ENCODE measurements at regions of chr2 and their contacts with region 1.

Region 1: DNA sequence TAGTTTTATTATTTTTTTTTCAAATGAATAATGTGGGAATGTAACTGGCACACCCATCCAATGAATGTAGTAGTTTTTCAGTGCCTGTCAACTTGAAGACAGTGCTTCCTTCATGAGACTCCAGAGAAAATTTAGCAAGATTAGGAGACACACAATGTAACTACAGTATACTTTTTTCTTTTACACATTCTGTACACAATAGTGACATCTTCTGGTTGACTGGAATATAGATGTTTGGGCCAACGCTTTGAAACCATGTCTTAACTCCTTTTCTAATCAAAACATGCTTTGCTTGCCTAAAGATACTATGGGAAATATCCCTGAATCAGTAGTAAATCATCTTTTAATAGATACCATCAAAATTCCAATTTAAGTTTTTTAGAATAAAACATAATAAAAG is 229.5 kb upstream of the ZC3H15 start:
- DNase-seq: peak; percentile 76
- ATAC-seq: peak; percentile 78
- H3K4me3 ChIP-seq: no peak overlapping the region
- H3K27ac ChIP-seq: no peak overlapping the region
- H3K4me1 ChIP-seq: no peaks in the 10 kb centered on the region
- H3K27me3 ChIP-seq: no peaks in the 10 kb centered on the region
- CTCF ChIP-seq: peak; percentile 88

Region 2: DNA sequence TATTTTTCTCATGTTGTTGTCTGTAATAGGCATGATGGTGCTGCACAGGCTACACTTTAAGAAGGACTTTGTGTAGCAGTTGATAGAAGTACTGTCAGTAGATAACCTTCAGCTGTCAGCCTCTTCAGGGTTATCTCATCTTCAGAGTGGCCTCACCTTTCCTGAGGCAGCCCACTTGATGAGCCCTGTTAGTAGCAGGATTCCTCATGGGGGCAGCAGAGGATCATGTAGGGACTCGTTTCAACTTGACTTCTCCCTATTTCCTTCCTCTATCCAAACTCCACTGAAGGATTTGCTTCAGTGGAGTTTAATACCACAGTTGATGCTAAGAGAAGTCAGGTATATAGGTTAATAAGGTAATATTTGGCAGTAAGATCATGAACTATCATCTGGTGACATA is 1048.3 kb before region 1 on chr2:
- CTCF ChIA-PET with region 1: no interaction called
- POLR2A ChIA-PET with region 1: no interaction called
- intact Hi-C with region 1: loop called (anchors 1 kb)
- DNase-seq: peak; percentile 70
- ATAC-seq: peak; percentile 98
- H3K4me3 ChIP-seq: no peak overlapping the region
- H3K27ac ChIP-seq: no peak overlapping the region
- H3K4me1 ChIP-seq: no peaks in the 10 kb centered on the region
- H3K27me3 ChIP-seq: no peaks in the 10 kb centered on the region
- CTCF ChIP-seq: peak; percentile 89

Region 3: DNA sequence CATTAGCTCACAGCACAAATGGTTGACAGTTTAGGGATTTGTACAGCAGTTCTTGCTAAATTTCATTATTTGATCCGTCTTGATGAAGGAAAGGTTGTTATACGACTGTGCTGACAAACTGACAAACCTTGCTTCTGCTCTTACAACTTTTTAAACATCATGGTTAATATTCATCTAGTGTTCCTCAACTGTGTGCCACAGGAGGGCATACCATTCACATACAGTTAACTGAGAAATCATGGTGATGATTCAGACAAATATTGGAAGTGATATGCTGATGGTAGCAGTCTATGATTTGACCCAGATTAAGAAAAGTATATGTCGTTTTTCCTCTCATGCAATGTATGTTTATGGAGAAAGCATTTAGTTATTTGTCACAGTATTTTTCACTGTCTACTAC is 647.7 kb before region 1 on chr2:
- CTCF ChIA-PET with region 1: no interaction called
- POLR2A ChIA-PET with region 1: no interaction called
- intact Hi-C with region 1: loop called (anchors 1 kb)
- DNase-seq: peak; percentile 71
- ATAC-seq: peak; percentile 64
- H3K4me3 ChIP-seq: no peak overlapping the region
- H3K27ac ChIP-seq: no peak overlapping the region
- H3K4me1 ChIP-seq: peaks cover 3% of the 10 kb centered on the region; the same call in 1 of the 2 replicates
- H3K27me3 ChIP-seq: no peaks in the 10 kb centered on the region
- CTCF ChIP-seq: peak; percentile 72

Region 4: GRCh38 chr2:185979546-185980071 is 276.9 kb before region 1 on chr2:
- CTCF ChIA-PET with region 1: no interaction called
- POLR2A ChIA-PET with region 1: no interaction called
- intact Hi-C with region 1: loop called (anchors 1 kb)
- DNase-seq: peak; percentile 92
- ATAC-seq: peak; percentile 90
- H3K4me3 ChIP-seq: peak overlapping the region; percentile 4; the same call in 1 of the 2 replicates
- H3K27ac ChIP-seq: peak overlapping the region; percentile 94
- H3K4me1 ChIP-seq: peaks cover 20% of the 10 kb centered on the region
- H3K27me3 ChIP-seq: no peaks in the 10 kb centered on the region
- CTCF ChIP-seq: peak; percentile 56

Region 5: GRCh38 chr2:186027922-186028321 is 228.6 kb before region 1 on chr2:
- CTCF ChIA-PET with region 1: no interaction called
- POLR2A ChIA-PET with region 1: no interaction called
- intact Hi-C with region 1: no loop called
- DNase-seq: no peak
- ATAC-seq: no peak
- H3K4me3 ChIP-seq: no peak overlapping the region
- H3K27ac ChIP-seq: no peak overlapping the region
- H3K4me1 ChIP-seq: no peaks in the 10 kb centered on the region
- H3K27me3 ChIP-seq: no peaks in the 10 kb centered on the region
- CTCF ChIP-seq: no peak

Region 6: DNA sequence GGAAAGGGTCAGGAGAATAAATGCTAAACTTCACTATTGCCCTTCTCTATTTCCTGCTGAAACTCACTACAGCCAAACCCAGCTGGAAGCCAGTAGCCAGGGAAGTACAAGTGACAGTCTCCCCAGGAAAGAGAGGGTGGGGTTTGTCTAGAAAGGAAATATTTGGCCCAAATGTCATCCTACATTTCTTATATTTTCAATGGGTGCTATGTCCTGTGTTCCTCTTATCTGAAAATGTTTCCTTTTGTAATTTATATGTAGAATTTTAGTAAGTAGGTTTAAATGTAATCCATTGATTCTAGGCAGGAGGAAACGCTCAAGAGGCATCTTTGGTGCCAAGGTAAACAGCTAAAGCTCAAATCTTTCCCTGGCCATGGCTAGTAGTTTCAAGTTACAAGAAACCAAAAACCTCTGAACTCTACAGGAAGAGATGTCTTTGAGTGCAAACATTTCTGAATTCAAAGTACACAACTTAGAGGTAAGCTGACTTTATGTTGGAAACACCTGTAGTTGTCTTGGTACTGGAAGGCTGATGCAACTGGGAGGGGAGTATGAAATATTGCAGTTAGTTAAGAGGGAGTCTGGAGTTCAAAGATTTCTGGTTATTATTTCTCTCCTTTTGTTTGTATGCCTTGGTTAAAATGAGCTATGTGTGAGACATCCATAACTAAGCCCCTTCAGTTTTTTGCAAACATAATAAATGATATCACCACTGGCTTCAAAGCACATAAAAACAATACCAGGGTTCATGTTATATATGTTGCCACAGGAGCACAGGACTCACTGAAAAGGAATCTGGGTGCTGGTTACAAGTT is 126.6 kb before region 1 on chr2:
- CTCF ChIA-PET with region 1: interaction called, 3 read pairs
- POLR2A ChIA-PET with region 1: interaction called, 5 read pairs
- intact Hi-C with region 1: loop called (anchors 2 kb)
- DNase-seq: peak; percentile 87
- ATAC-seq: peak; percentile 75
- H3K4me3 ChIP-seq: peak overlapping the region; percentile 40; the same call in 1 of the 2 replicates
- H3K27ac ChIP-seq: peak overlapping the region; percentile 87
- H3K4me1 ChIP-seq: peaks cover 47% of the 10 kb centered on the region
- H3K27me3 ChIP-seq: no peaks in the 10 kb centered on the region
- CTCF ChIP-seq: no peak